CD8-positive, alpha-beta T cell (primary cell): ENCODE measurements at regions of chr10 and their contacts with region 1.

Region 1: DNA sequence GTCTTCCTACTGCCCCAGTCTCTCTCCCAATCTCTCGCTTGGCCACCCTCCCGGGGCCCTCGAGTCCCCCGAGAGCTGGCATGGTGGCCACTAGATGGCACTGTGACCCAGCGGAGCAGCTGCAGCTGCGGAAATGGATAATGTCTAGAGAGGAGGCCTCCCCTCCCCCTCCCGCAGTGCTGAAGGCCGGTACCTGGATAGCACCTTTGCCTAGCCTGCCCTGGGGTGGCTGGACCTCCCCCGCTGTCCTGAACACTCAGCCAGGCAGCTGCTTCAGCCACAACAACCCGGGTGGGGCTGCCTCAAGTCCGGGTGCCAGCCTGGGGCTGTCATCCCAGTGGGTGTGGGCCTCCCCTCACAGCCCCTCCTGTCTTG is 65.2 kb downstream of the GOLGA7B start:
- DNase-seq: peak; percentile 44 to 81 (median 72)
- ATAC-seq: peak; percentile 85
- H3K4me3 ChIP-seq: no peak overlapping the region
- H3K4me3 Mint-ChIP-seq: no peak overlapping the region
- H3K27ac ChIP-seq: no peak overlapping the region
- H3K27ac Mint-ChIP-seq: no peak overlapping the region
- H3K4me1 ChIP-seq: no peaks in the 10 kb centered on the region
- H3K4me1 Mint-ChIP-seq: peaks cover 5% of the 10 kb centered on the region
- H3K27me3 ChIP-seq: peaks cover 0 to 3% of the 10 kb centered on the region in 2 experiments
- H3K27me3 Mint-ChIP-seq: peaks cover 13% of the 10 kb centered on the region
- CTCF ChIP-seq: peak; percentile 91

Region 2: GRCh38 chr10:97903128-97904017 is 11.5 kb before region 1 on chr10:
- CTCF ChIA-PET with region 1: interaction called, 46 read pairs
- POLR2A ChIA-PET with region 1: no interaction called
- intact Hi-C with region 1: no loop called
- DNase-seq: no peak
- ATAC-seq: no peak
- H3K4me3 ChIP-seq: no peak overlapping the region
- H3K4me3 Mint-ChIP-seq: no peak overlapping the region
- H3K27ac ChIP-seq: no peak overlapping the region
- H3K27ac Mint-ChIP-seq: no peak overlapping the region
- H3K4me1 ChIP-seq: no peaks in the 10 kb centered on the region
- H3K4me1 Mint-ChIP-seq: no peaks in the 10 kb centered on the region
- H3K27me3 ChIP-seq: no peaks in the 10 kb centered on the region
- H3K27me3 Mint-ChIP-seq: peaks cover 21% of the 10 kb centered on the region
- CTCF ChIP-seq: no peak

Region 3: DNA sequence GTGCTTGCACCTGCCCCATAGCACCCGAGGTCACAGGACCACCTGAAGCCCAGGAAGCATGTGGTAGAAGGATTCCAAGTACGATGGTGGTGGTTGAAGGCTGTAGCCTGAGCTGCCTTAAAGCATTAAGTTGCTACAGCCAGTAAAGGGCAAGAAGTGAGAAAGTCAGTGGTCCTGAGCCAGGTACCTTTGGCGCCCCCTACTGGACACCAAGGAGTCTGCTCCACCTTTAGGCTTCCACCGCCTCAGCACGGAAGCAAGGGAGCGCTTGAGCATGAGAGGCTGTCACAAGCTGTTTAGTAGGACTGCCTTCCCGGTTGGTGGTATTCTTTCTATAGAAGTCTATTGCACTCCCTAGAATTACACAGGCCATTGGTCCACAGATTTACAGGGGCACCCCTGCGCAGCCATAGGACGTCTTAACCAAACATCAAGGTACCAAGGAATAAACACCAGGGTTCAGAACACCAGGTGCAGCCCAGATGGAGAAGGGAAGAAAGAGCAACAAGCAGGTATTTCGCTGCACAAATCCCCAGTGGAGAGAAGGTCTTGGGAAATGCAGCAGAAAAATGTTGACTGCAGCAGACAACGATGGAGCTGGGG is 113.4 kb after region 1 on chr10:
- CTCF ChIA-PET with region 1: interaction called, 4 read pairs
- POLR2A ChIA-PET with region 1: no interaction called
- intact Hi-C with region 1: loop called in 1 of 2 experiments (anchors 1 kb)
- DNase-seq: peak; percentile 25 to 74 (median 62)
- ATAC-seq: peak; percentile 66
- H3K4me3 ChIP-seq: no peak overlapping the region
- H3K4me3 Mint-ChIP-seq: no peak overlapping the region
- H3K27ac ChIP-seq: no peak overlapping the region
- H3K27ac Mint-ChIP-seq: no peak overlapping the region
- H3K4me1 ChIP-seq: peaks cover 4% of the 10 kb centered on the region
- H3K4me1 Mint-ChIP-seq: peaks cover 7% of the 10 kb centered on the region
- H3K27me3 ChIP-seq: peaks cover 5 to 23% of the 10 kb centered on the region in 2 experiments
- H3K27me3 Mint-ChIP-seq: peaks cover 53% of the 10 kb centered on the region
- CTCF ChIP-seq: peak; percentile 60

Region 4: GRCh38 chr10:98045785-98046389 is 131.1 kb after region 1 on chr10:
- CTCF ChIA-PET with region 1: interaction called, 34 read pairs
- POLR2A ChIA-PET with region 1: no interaction called
- intact Hi-C with region 1: loop called (anchors 1 kb)
- DNase-seq: peak; percentile 21 to 76 (median 54)
- ATAC-seq: peak; percentile 72
- H3K4me3 ChIP-seq: no peak overlapping the region
- H3K4me3 Mint-ChIP-seq: no peak overlapping the region
- H3K27ac ChIP-seq: no peak overlapping the region
- H3K27ac Mint-ChIP-seq: no peak overlapping the region
- H3K4me1 ChIP-seq: peaks cover 6% of the 10 kb centered on the region
- H3K4me1 Mint-ChIP-seq: peaks cover 4% of the 10 kb centered on the region
- H3K27me3 ChIP-seq: peaks cover 3% of the 10 kb centered on the region in 2 experiments
- H3K27me3 Mint-ChIP-seq: peaks cover 30% of the 10 kb centered on the region
- CTCF ChIP-seq: peak; percentile 93

Region 5: DNA sequence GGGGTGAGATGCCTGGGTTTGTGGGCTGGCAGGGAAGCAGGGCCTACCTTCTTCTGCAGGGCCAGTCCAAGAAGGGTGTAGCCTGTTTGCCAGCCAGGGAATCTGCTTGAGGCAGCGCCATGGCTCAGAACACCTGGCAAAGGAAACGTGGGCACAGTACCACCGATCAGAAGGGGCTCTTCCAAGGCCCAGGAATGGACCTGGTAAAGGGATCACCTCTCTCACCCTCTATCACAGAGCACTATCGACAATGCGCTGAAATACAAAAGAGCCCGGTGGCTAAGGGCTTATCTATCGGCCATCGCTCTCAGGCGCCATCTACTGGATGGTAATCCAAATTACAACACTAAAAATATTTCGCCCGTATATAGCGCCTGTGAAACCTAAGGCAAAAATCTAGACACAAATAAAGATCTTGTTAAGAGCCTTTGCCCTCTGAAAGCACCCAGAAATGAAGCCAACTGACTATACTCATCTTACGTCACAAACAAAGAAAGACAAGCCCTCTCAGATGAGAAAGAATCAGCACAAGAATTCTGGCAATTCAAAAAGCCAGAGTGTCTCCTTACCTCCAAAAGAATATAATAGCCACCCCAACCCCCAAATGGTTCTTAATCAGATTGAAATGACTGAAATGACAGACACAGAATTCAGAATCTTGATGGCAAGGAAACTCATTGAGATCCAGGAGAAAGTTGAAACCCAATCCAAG is 749.7 kb after region 1 on chr10:
- CTCF ChIA-PET with region 1: no interaction called
- POLR2A ChIA-PET with region 1: no interaction called
- intact Hi-C with region 1: loop called in 1 of 2 experiments (anchors 10 kb)
- DNase-seq: peak in 6 of 9 experiments; percentile 5 to 63 (median 40)
- ATAC-seq: no peak
- H3K4me3 ChIP-seq: no peak overlapping the region
- H3K4me3 Mint-ChIP-seq: no peak overlapping the region
- H3K27ac ChIP-seq: no peak overlapping the region
- H3K27ac Mint-ChIP-seq: no peak overlapping the region
- H3K4me1 ChIP-seq: no peaks in the 10 kb centered on the region
- H3K4me1 Mint-ChIP-seq: no peaks in the 10 kb centered on the region
- H3K27me3 ChIP-seq: peaks cover 0 to 2% of the 10 kb centered on the region in 2 experiments
- H3K27me3 Mint-ChIP-seq: peaks cover 12% of the 10 kb centered on the region
- CTCF ChIP-seq: peak; percentile 57